ENCODE measurements at regions of chrX and their contacts with region 1.

Region 1: DNA sequence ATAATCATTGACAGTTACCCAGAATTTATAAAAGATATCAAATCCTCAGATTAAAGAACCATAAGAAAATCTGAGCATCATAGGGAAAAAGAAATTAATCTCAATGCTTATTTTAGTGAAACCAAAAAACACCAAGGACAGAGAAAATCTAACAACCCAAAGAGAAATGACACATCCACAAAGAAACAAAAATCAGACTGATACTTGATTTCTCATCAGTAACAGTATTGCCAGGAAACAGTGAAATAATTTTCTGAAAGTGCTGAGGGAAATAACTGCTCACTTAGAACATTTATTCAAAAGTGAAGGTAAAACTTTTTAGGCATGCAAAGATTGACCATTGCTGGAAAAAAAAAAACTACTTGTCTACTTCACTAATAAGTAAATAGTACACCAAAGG is 10.6 kb downstream of the MOSPD2 start:
- DNase-seq: no peak
- H3K4me3 Mint-ChIP-seq: peak overlapping the region; percentile 63
- H3K27ac Mint-ChIP-seq: peak overlapping the region; percentile 94
- H3K4me1 Mint-ChIP-seq: peaks cover 60% of the 10 kb centered on the region
- H3K27me3 Mint-ChIP-seq: no peaks in the 10 kb centered on the region

Region 2: DNA sequence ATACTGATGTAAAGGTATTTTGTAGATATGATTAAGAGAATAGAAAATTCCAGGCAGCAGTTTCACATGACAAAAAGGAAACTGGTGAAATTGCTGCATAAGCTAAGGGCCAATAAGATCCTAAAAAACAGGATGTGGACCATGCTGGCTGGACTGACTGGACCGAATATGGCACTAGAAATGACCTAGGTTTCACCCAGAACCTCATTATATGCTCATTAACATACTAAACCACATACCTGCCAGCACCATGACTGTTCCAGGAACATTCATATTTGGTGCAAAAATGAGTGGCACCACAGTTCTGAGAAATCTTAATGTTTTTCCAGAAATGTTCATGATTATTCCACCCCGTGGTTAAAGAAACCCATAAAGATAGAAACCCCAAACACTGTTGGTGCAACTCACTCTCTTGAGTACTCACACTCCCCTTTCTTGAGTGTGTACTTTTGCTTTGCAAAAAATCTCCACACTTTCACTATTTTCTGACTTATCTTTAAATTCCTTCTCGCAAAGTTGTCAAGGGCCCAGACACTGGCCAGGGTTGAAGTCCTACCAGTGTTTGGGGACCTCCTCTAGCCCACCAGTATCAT is 84.9 kb before region 1 on chrX:
- CTCF ChIA-PET with region 1: no interaction called
- intact Hi-C with region 1: loop called (anchors 5 kb)
- DNase-seq: peak; percentile 7
- H3K4me3 Mint-ChIP-seq: no peak overlapping the region
- H3K27ac Mint-ChIP-seq: peak overlapping the region; percentile 76
- H3K4me1 Mint-ChIP-seq: peaks cover 13% of the 10 kb centered on the region
- H3K27me3 Mint-ChIP-seq: no peaks in the 10 kb centered on the region

Region 3: GRCh38 chrX:14899607-14900006 is 15.8 kb after region 1 on chrX:
- CTCF ChIA-PET with region 1: no interaction called
- intact Hi-C with region 1: loop called (anchors 1 kb)
- DNase-seq: no peak
- H3K4me3 Mint-ChIP-seq: no peak overlapping the region
- H3K27ac Mint-ChIP-seq: peak overlapping the region; percentile 77
- H3K4me1 Mint-ChIP-seq: peaks cover 8% of the 10 kb centered on the region
- H3K27me3 Mint-ChIP-seq: no peaks in the 10 kb centered on the region